ENCODE measurements at regions of chr2 and their contacts with region 1.

Region 1: DNA sequence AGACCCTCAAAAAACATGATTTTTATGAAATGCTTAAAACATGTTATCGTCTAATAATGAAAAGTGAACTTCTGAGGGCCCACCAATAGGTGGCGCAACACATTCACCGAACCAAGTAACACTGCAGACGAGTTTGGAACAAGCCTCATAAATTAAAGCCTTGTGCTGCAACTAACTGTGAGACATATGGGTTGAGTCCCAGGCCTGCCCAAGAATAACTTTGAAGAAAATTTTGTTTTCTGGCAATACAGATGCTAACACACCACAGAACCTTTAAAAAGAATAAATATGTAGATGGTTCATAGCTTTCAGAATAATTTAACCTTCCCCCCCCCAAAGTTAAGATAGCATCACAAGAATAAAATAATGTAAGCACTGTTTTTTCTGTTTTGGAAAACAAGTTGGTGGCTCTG is 285.8 kb downstream of the RNF144A start:
- DNase-seq: peak in 5 of 6 donors; percentile 23 to 64 (median 48)
- ATAC-seq: peak; percentile 70 to 95 (median 88)
- H3K4me3 ChIP-seq: no peak overlapping the region
- H3K27ac ChIP-seq: no peak overlapping the region
- H3K4me1 ChIP-seq: no peaks in the 10 kb centered on the region
- H3K27me3 ChIP-seq: no peaks in the 10 kb centered on the region
- CTCF ChIP-seq: peak; percentile 65 to 86 (median 82)

Region 2: DNA sequence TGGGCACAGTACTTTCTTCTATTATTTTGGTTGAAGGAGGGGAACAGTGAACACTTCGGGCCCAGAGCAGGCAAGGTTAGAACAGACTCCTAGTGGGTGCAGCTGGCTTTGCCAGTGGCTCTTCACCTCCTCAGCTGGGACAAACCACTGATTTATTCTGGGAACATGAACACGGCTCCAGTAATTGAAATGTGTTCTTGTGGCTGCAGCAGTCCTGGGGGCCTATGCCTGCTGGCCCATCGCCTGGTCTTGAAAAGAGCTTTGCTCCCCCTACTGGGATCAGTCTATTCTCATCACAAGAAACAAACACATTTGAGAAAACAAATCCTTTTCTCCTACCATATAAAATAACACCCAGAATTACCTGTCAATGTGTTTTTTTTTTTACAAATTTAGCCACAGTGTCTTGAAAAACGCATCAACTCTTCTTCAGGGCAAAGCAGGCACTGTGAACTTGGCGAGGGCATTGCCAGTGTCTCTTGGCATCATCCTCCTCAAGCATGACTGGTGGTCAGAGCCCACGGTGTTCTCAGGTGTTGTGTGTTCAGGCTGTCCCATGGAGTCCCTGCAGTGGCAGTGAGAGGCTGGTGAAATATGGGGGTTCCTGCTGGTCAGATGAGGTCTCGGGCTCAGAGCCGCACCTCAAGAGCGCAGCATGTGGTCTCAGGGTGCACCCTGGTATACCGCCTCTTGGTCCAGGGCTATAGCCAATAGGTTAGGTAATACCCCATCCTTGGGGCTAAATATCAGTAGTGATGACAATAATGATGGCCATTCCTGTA is 234.6 kb before region 1 on chr2:
- intact Hi-C with region 1: no loop called
- DNase-seq: no peak
- ATAC-seq: peak in 2 of 4 donors; percentile 35 to 48
- H3K4me3 ChIP-seq: no peak overlapping the region
- H3K27ac ChIP-seq: no peak overlapping the region
- H3K4me1 ChIP-seq: no peaks in the 10 kb centered on the region
- H3K27me3 ChIP-seq: no peaks in the 10 kb centered on the region
- CTCF ChIP-seq: no peak

Region 3: DNA sequence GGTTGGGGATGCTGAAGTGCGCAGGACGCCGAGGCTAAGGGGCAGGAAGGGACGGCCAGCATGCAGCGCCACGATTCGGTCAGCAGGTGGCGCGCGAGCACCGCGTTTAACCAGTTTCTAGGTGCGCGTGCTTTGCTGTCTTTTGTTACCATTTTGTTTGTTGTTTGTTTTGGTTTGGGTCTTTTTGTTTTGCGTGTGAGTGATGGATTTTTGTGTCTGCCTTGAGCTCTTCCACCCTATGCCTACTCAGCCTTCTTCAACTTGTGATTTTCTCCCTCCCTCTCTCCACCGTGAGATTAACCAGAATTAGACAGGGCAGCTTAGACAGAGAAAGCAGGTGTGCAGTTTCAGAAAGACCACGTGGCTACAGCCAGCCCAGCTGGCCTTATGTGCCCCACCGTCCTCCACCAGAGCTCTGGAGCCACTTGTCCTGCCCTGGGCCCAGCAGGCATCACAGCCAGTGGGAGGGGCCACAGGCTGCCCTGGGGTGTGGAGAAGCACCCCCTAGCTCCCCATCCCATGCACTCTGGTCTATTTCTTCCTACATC is 105.6 kb before region 1 on chr2:
- intact Hi-C with region 1: no loop called
- DNase-seq: peak; percentile 51 to 94 (median 76)
- ATAC-seq: peak; percentile 92 to 99 (median 96)
- H3K4me3 ChIP-seq: peak overlapping the region in 1 of 4 donors; percentile 29
- H3K27ac ChIP-seq: no peak overlapping the region
- H3K4me1 ChIP-seq: peaks cover 0 to 3% (median 0%) of the 10 kb centered on the region in 3 donors
- H3K27me3 ChIP-seq: no peaks in the 10 kb centered on the region
- CTCF ChIP-seq: peak; percentile 94 to 96 (median 96)

Region 4: GRCh38 chr2:7379802-7380201 is 176.7 kb after region 1 on chr2:
- intact Hi-C with region 1: loop called in 1 of 3 experiments (anchors 10 kb)
- DNase-seq: peak in 4 of 6 donors; percentile 53 to 64 (median 58)
- ATAC-seq: peak; percentile 74 to 93 (median 83)
- H3K4me3 ChIP-seq: no peak overlapping the region
- H3K27ac ChIP-seq: no peak overlapping the region
- H3K4me1 ChIP-seq: peaks cover 4 to 12% (median 8%) of the 10 kb centered on the region in 3 donors
- H3K27me3 ChIP-seq: no peaks in the 10 kb centered on the region
- CTCF ChIP-seq: no peak

Measured in pancreas (tissue), 10 donors.